Right cardiac atrium (tissue), 5 donors: ENCODE measurements at regions of chrX and their contacts with region 1.

Region 1: GRCh38 chrX:76454456-76454927 is 27.0 kb downstream of the MAGEE1 start:
- DNase-seq: no peak
- ATAC-seq: no peak
- H3K4me3 ChIP-seq: no peak overlapping the region
- H3K27ac ChIP-seq: no peak overlapping the region
- H3K4me1 ChIP-seq: no peaks in the 10 kb centered on the region
- H3K27me3 ChIP-seq: no peaks in the 10 kb centered on the region

Region 2: DNA sequence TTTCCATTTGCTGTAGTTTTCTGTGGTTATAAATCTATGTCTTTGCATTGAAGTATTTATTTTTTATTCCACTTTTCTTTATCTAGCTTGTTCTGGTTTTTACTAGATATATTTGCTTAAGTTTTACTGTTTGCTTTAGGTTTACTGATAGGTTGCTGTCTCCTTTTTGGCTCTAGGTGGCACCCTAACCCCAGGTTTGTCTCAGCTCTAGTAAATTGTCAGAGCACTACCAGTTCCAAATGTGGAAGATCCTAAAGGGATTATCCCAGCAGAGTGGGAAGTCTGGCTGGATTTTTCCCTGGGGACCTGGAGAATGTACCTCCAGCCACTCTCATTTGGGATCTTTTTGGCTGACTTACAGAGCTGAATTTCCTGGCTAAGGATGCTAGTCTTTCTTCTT is 175.5 kb before region 1 on chrX:
- intact Hi-C with region 1: loop called in 1 of 4 experiments (anchors 10 kb)
- DNase-seq: no peak
- ATAC-seq: no peak
- H3K4me3 ChIP-seq: no peak overlapping the region
- H3K27ac ChIP-seq: no peak overlapping the region
- H3K4me1 ChIP-seq: no peaks in the 10 kb centered on the region
- H3K27me3 ChIP-seq: no peaks in the 10 kb centered on the region

Region 3: DNA sequence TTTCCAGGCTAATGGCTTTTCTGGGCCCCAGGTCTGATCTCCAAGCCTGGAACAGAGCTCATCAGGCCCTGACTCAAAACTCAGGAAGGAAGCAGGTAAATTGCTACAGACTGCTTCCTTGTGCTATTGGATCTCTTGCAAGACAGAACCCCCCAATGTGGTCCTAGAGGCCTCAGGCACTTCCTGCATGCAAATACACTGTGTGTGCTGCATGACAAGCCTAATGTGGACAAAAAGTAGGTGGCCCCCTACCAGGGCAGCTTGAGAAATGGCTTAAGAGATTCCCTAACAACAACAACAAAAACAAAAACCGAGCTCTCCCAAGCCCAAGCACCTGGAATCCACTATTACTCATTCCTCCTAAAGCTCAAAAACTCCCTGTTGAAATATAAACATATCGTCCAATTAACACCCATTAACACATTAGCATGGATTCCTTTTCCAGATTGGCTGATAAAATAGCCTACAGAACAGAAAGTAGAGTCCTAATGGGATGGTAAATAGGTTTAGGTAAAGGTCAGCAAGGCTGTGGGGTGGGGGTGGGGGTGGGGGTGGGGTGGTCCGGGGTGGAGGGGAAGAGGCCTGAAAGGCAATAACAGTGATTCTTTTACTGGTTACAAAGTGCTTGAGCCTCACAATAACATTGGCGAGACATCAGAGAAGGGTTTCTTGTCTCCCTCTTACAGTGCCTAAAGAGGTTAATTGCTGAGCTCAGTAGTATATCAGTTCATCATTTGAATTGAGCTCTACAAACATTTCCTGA is 968.6 kb after region 1 on chrX:
- intact Hi-C with region 1: no loop called
- DNase-seq: no peak
- ATAC-seq: no peak
- H3K4me3 ChIP-seq: no peak overlapping the region
- H3K27ac ChIP-seq: no peak overlapping the region
- H3K4me1 ChIP-seq: no peaks in the 10 kb centered on the region
- H3K27me3 ChIP-seq: no peaks in the 10 kb centered on the region